ENCODE measurements at regions of chr3 and their contacts with region 1.

Region 1: GRCh38 chr3:69294014-69294775 is 91.7 kb downstream of the FRMD4B start:
- DNase-seq: no peak
- H3K4me3 ChIP-seq: no peak overlapping the region
- H3K27ac ChIP-seq: no peak overlapping the region
- H3K27me3 ChIP-seq: peaks cover 7% of the 10 kb centered on the region
- CTCF ChIP-seq: no peak

Region 2: GRCh38 chr3:69174871-69175737 is 119.1 kb before region 1 on chr3:
- CTCF ChIA-PET with region 1: interaction called, 11 read pairs
- POLR2A ChIA-PET with region 1: no interaction called
- DNase-seq: no peak
- H3K4me3 ChIP-seq: no peak overlapping the region
- H3K27ac ChIP-seq: no peak overlapping the region
- H3K27me3 ChIP-seq: no peaks in the 10 kb centered on the region
- CTCF ChIP-seq: no peak

Measured in AG04450 (cell line).